ENCODE measurements at regions of chr6 and their contacts with region 1.

Region 1: GRCh38 chr6:34154668-34155447 is 9.0 kb upstream of the GRM4 start:
- DNase-seq: peak; percentile 88

Region 2: GRCh38 chr6:34067814-34068213 is 87.0 kb before region 1 on chr6:
- intact Hi-C with region 1: no loop called
- DNase-seq: no peak

Region 3: GRCh38 chr6:34128045-34128444 is 26.8 kb before region 1 on chr6:
- intact Hi-C with region 1: loop called in 1 of 2 experiments (anchors 1 kb)
- DNase-seq: no peak

Region 4: DNA sequence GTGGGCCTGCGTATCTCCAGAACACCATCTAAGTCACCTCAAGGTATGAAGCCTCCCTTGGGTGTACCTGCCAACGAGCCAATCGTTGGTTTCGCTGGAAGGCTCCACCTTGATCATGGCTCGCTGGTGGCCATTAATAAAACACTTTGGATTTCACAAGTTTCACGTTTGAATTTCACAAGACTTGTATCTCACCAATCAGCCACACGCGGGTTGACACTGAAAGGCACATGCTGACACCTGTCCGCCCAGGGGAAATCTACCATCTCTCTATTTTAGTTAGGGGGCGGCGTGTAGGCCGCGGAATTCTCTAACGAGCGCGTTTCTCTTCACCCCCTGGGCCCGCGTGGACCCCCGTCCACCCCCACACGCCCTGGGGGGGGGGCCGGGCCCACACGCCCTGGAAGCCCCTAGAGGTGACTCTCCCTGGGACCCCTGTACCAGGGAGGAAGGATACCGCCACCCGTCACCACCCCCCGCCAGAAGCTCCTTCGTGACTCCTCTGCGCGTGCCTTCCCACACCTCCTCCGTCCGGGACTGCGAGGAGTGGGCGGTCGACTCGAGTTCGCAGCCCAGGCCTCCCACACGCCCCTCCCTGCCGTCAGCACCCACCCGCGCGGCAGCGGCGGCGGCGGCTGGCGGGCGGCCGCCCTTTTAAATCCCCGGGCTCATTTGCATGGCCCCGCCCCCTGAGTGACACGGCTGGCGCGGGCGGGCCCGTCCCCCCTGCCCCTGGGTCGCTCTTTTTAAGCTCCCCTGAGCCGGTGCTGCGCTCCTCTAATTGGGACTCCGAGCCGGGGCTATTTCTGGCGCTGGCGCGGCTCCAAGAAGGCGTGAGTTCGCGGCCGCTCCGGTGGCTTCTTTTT is 81.5 kb after region 1 on chr6 and contains the start of gene HMGA1:
- intact Hi-C with region 1: no loop called
- DNase-seq: peak; percentile 93
- total RNA-seq, gene HMGA1: 11.3 to 39.7 TPM

Region 5: GRCh38 chr6:35453236-35453635 is 1298.4 kb after region 1 on chr6:
- intact Hi-C with region 1: no loop called
- DNase-seq: no peak

Measured in posterior vena cava (tissue), 2 donors.